ENCODE measurements at regions of chr3 and their contacts with region 1.

Region 1: GRCh38 chr3:126300761-126301481 is 56.3 kb downstream of the KLF15 start:
- DNase-seq: no peak
- ATAC-seq: no peak; the same call in 1 of the 2 replicates
- H3K4me3 ChIP-seq: no peak overlapping the region
- H3K27ac ChIP-seq: no peak overlapping the region
- H3K4me1 ChIP-seq: no peaks in the 10 kb centered on the region
- H3K27me3 ChIP-seq: no peaks in the 10 kb centered on the region
- CTCF ChIP-seq: no peak

Region 2: GRCh38 chr3:126419886-126420786 is 119.2 kb after region 1 on chr3:
- CTCF ChIA-PET with region 1: no interaction called
- POLR2A ChIA-PET with region 1: no interaction called
- in situ Hi-C with region 1: no loop called
- intact Hi-C with region 1: no loop called
- DNase-seq: no peak
- ATAC-seq: no peak
- H3K4me3 ChIP-seq: no peak overlapping the region
- H3K27ac ChIP-seq: no peak overlapping the region
- H3K4me1 ChIP-seq: no peaks in the 10 kb centered on the region
- H3K27me3 ChIP-seq: no peaks in the 10 kb centered on the region
- CTCF ChIP-seq: no peak

Region 3: GRCh38 chr3:126908752-126909275 is 607.9 kb after region 1 on chr3:
- CTCF ChIA-PET with region 1: no interaction called
- POLR2A ChIA-PET with region 1: no interaction called
- in situ Hi-C with region 1: no loop called
- intact Hi-C with region 1: loop called (anchors 10 kb)
- DNase-seq: no peak
- ATAC-seq: no peak
- H3K4me3 ChIP-seq: no peak overlapping the region
- H3K27ac ChIP-seq: no peak overlapping the region
- H3K4me1 ChIP-seq: peaks cover 8% of the 10 kb centered on the region; the same call in 1 of the 2 replicates
- H3K27me3 ChIP-seq: no peaks in the 10 kb centered on the region
- CTCF ChIP-seq: no peak